ENCODE measurements at regions of chr5 and their contacts with region 1.

Region 1: GRCh38 chr5:36690041-36690961 is 83.9 kb downstream of the SLC1A3 start:
- DNase-seq: peak; percentile 91
- H3K4me3 ChIP-seq: peak overlapping the region; percentile 44 to 65 (median 56)
- H3K27ac ChIP-seq: peak overlapping the region; percentile 64 to 78 (median 72)
- H3K4me1 ChIP-seq: peaks cover 0 to 16% (median 4%) of the 10 kb centered on the region in 4 donors
- H3K27me3 ChIP-seq: peaks cover 0 to 10% (median 0%) of the 10 kb centered on the region in 3 donors
- CTCF ChIP-seq: peak; percentile 54 to 81 (median 72)
- EP300 ChIP-seq: no peak
- POLR2A ChIP-seq: no peak

Region 2: DNA sequence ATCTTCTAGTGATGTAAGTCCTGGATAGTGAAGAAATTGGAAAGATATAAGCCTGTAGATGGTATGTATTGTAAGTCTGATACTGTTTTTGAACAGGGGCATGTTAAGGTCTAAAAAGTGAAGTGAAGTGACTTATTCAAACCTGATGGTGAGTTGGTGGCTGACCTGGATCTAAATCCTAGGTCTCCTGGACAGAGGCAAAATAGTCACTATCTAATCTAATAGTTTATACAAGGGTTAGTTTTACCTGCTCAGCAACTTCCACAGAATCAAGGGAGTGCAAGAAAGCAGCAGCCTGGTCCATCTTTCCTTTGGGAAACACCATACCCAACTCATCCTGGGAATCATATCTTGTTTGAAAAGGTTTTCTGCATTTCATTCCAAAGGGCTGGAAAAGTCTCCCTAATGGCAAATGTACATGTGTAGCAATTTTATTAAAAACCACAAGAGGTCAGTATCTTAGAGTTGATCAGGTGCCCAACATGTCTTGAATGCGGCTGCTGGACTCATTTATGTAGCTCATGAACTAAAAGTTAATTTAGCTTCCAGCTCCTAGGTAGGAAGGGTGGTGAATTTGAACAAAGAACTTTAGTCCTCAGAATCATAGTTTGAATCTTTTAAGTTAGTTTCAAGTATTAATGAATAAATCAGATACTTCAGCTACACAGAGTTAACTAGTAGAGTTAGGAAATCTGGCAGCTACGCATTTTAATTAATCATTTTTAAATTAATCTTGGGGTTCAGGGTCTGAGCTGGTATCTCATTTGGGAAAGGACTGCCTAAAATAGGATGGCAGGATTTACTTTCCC is 512.4 kb before region 1 on chr5:
- intact Hi-C with region 1: loop called (anchors 10 kb)
- DNase-seq: no peak
- H3K4me3 ChIP-seq: no peak overlapping the region
- H3K27ac ChIP-seq: no peak overlapping the region
- H3K4me1 ChIP-seq: no peaks in the 10 kb centered on the region
- H3K27me3 ChIP-seq: no peaks in the 10 kb centered on the region
- CTCF ChIP-seq: peak; percentile 11 to 59 (median 37)
- EP300 ChIP-seq: no peak
- POLR2A ChIP-seq: no peak

Region 3: GRCh38 chr5:36414869-36415282 is 275.4 kb before region 1 on chr5:
- intact Hi-C with region 1: loop called (anchors 2 kb)
- DNase-seq: no peak
- H3K4me3 ChIP-seq: no peak overlapping the region
- H3K27ac ChIP-seq: no peak overlapping the region
- H3K4me1 ChIP-seq: peaks cover 0 to 10% (median 3%) of the 10 kb centered on the region in 4 donors
- H3K27me3 ChIP-seq: no peaks in the 10 kb centered on the region
- CTCF ChIP-seq: peak; percentile 20 to 47 (median 43)
- EP300 ChIP-seq: no peak
- POLR2A ChIP-seq: no peak

Region 4: DNA sequence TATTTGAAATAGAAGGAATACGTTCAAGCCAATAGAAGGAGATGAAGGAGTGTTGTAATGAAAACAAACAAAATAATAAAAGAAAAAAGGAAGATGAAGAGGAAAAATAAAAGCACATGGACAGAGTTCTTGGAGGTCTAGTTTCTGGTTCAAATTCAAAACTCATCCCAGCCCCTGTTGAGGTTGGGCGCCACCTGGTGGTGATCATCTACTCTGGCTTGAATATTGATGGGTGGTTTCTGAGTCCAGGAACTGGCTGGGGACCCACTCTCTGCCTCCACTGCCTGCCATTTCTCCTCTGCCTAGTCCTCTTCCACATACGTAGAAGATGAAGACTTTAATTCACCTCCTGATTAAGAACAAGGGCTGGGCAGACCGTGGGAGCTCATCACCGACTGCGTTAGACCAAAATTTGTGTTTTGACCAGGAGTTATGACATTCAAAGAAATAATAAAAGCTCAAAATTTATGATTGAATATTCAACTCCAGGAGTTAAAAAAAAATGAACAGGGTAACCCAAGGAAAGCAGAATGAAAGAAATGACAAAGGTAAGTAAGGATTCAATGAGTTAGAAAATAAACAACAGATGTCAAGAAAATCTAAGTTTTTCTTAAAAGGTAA is 182.9 kb before region 1 on chr5:
- intact Hi-C with region 1: loop called (anchors 5 kb)
- DNase-seq: peak; percentile 88
- H3K4me3 ChIP-seq: no peak overlapping the region
- H3K27ac ChIP-seq: no peak overlapping the region
- H3K4me1 ChIP-seq: peaks cover 0 to 10% (median 0%) of the 10 kb centered on the region in 4 donors
- H3K27me3 ChIP-seq: no peaks in the 10 kb centered on the region
- CTCF ChIP-seq: peak; percentile 71 to 82 (median 76)
- EP300 ChIP-seq: no peak
- POLR2A ChIP-seq: no peak

Region 5: GRCh38 chr5:36561601-36562000 is 128.7 kb before region 1 on chr5:
- intact Hi-C with region 1: no loop called
- DNase-seq: no peak
- H3K4me3 ChIP-seq: no peak overlapping the region
- H3K27ac ChIP-seq: no peak overlapping the region
- H3K4me1 ChIP-seq: no peaks in the 10 kb centered on the region
- H3K27me3 ChIP-seq: no peaks in the 10 kb centered on the region
- CTCF ChIP-seq: no peak
- EP300 ChIP-seq: no peak
- POLR2A ChIP-seq: no peak

Measured in sigmoid colon (tissue), 7 donors.